IMR-90 (cell line): ENCODE measurements at regions of chr10 and their contacts with region 1.

Region 1: DNA sequence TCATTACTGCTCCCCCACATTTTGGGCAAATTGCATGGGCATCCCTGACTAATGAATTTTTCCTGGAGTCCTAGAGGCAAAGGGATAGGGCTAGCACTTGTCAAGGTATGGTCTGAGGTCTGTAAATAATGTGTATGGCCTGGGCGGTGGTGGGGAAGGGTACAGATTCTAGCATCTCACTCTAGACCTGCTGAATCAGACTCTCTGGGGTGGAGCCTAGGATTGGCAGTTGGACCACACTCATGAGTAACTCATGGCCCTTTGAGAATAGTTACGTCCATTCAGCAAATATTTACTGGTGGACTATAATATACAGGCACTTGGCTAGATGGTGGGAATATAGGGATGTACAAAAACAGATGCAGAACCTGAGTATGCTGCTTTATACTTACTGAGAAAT is 118.0 kb downstream of the CELF2 start:
- DNase-seq: no peak
- ATAC-seq: no peak
- H3K4me3 ChIP-seq: no peak overlapping the region
- H3K27ac ChIP-seq: no peak overlapping the region
- H3K4me1 ChIP-seq: no peaks in the 10 kb centered on the region
- H3K27me3 ChIP-seq: no peaks in the 10 kb centered on the region
- CTCF ChIP-seq: no peak
- POLR2A ChIP-seq: no peak
- RAD21 ChIP-seq: no peak

Region 2: GRCh38 chr10:11163780-11164550 is 28.3 kb after region 1 on chr10:
- CTCF ChIA-PET with region 1: no interaction called
- POLR2A ChIA-PET with region 1: interaction called, 14 read pairs
- dilution Hi-C with region 1: no loop called
- in situ Hi-C with region 1: no loop called
- intact Hi-C with region 1: no loop called
- DNase-seq: no peak
- ATAC-seq: no peak
- H3K4me3 ChIP-seq: no peak overlapping the region
- H3K27ac ChIP-seq: no peak overlapping the region
- H3K4me1 ChIP-seq: peaks cover 3% of the 10 kb centered on the region; the same call in 1 of the 2 replicates
- H3K27me3 ChIP-seq: peaks cover 3% of the 10 kb centered on the region; the same call in 1 of the 2 replicates
- CTCF ChIP-seq: no peak
- POLR2A ChIP-seq: no peak
- RAD21 ChIP-seq: no peak